ENCODE measurements at regions of chr9 and their contacts with region 1.

Region 1: DNA sequence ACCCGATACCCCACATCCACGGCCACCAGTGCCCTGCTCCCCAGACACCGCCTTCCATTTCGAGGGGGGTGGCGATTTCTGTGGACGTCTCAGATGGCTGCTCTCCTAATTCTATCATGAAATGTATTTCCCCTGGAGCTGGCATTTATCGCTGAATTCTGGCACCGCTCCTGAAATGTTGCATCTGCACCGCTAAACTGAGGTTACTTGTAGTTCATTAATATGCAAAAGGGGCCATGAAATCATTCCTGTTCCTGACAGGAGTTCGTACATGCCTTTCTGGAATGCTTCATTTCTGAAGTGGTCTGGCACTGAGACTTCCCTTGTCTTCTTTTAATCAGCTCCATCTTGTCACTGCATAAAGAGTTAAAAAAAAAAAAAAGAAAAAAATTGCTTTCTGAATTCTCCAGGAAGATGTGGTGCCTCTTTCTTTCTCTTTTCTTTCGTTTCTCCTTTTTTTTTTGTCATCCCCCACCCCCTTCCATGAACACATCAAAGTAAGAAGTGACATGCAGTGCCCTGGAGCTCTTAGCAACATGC is 97.7 kb upstream of the SMARCA2 start:
- DNase-seq: no peak
- CTCF ChIP-seq: no peak

Region 2: GRCh38 chr9:1929722-1930621 is 12.5 kb after region 1 on chr9:
- CTCF ChIA-PET with region 1: interaction called, 12 read pairs
- POLR2A ChIA-PET with region 1: no interaction called
- DNase-seq: no peak
- CTCF ChIP-seq: no peak

Measured in GM10248 (cell line).